Posterior vena cava (tissue), 2 donors: ENCODE measurements at regions of chr2 and their contacts with region 1.

Region 1: GRCh38 chr2:226835796-226836547 is at the start of gene RHBDD1:
- DNase-seq: peak; percentile 98
- total RNA-seq, gene RHBDD1: 39.3 to 40.5 TPM

Region 2: GRCh38 chr2:225670111-225670974 is 1165.6 kb before region 1 on chr2:
- intact Hi-C with region 1: loop called in 1 of 2 experiments (anchors 10 kb)
- DNase-seq: no peak

Region 3: DNA sequence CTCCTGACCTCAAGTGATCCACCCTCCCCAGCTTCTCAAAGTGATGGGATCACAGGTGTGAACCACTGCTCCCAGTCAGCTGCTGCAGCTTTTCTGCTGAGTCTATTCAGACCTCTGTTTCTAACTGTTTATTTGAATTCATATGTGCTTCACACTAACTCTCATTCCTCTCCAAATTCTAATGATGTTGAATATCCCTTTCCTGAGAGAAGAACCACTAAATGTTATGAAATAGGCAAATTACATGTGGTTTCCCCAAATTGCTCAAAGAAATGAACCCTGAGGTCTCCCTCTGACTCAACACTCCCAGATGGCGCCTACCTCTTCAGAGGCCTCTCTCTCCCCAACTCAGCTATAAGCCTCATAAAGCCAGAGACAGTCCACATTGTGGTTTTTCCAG is 134.9 kb before region 1 on chr2:
- intact Hi-C with region 1: no loop called
- DNase-seq: no peak